Stomach (tissue), 19 donors: ENCODE measurements at regions of chr5 and their contacts with region 1.

Region 1: GRCh38 chr5:44454002-44454401 is 64.8 kb upstream of the FGF10 start:
- DNase-seq: no peak
- H3K4me3 ChIP-seq: no peak overlapping the region
- H3K27ac ChIP-seq: no peak overlapping the region
- H3K4me1 ChIP-seq: no peaks in the 10 kb centered on the region
- H3K27me3 ChIP-seq: no peaks in the 10 kb centered on the region
- CTCF ChIP-seq: no peak
- EP300 ChIP-seq: no peak
- POLR2A ChIP-seq: no peak

Region 2: DNA sequence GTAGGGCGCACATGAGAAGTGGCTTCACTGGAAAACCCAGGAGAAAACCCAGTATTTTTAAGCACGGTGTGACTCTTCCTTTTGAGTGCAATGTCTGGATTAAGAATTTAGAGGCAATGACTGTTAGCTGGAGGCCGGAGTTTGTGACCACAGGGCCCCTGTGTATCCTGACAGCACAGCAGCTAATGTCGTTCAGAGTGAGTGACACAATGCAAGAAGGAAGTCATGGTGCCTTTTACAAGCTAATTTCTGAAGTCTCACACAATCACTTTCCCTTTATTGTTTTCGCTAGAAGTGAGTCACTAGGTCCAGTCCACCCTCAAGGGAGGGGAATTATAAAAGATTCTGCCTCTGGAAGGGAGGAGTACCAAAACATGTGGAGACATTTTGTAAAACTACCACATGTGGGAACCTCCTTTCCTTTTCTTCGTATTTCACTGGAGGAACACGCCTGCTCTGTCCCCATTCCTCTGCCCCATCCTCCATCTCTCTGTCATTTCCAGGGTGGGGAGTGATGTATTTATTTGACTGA is 120.7 kb after region 1 on chr5:
- intact Hi-C with region 1: loop called (anchors 10 kb)
- DNase-seq: no peak
- H3K4me3 ChIP-seq: no peak overlapping the region
- H3K27ac ChIP-seq: no peak overlapping the region
- H3K4me1 ChIP-seq: no peaks in the 10 kb centered on the region
- H3K27me3 ChIP-seq: no peaks in the 10 kb centered on the region
- CTCF ChIP-seq: no peak
- EP300 ChIP-seq: no peak
- POLR2A ChIP-seq: no peak

Region 3: DNA sequence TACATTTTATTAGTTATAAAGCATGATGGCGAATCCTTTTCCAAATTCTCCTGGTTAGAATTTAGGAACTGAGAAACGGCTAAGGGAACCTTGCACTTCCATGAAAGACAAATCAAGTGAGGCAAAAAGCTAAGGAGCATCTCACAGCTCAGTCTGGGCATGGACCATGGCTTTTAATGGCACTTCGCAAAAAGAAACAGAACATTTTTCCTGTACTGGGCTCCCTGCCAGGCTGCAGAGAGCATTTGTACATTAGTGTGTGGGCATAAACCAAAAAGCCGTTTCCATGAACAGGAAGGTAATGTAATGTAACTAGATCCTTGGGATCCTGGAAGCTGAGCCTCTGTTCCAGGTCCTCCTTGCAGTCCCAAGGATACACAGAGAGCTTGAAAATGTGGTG is 709.0 kb after region 1 on chr5:
- intact Hi-C with region 1: no loop called
- DNase-seq: peak in 1 of 2 donors; percentile 30
- H3K4me3 ChIP-seq: no peak overlapping the region
- H3K27ac ChIP-seq: no peak overlapping the region
- H3K4me1 ChIP-seq: no peaks in the 10 kb centered on the region
- H3K27me3 ChIP-seq: no peaks in the 10 kb centered on the region
- CTCF ChIP-seq: no peak
- EP300 ChIP-seq: no peak
- POLR2A ChIP-seq: no peak